Aorta (tissue), 5 donors: ENCODE measurements at regions of chr17 and their contacts with region 1.

Region 1: DNA sequence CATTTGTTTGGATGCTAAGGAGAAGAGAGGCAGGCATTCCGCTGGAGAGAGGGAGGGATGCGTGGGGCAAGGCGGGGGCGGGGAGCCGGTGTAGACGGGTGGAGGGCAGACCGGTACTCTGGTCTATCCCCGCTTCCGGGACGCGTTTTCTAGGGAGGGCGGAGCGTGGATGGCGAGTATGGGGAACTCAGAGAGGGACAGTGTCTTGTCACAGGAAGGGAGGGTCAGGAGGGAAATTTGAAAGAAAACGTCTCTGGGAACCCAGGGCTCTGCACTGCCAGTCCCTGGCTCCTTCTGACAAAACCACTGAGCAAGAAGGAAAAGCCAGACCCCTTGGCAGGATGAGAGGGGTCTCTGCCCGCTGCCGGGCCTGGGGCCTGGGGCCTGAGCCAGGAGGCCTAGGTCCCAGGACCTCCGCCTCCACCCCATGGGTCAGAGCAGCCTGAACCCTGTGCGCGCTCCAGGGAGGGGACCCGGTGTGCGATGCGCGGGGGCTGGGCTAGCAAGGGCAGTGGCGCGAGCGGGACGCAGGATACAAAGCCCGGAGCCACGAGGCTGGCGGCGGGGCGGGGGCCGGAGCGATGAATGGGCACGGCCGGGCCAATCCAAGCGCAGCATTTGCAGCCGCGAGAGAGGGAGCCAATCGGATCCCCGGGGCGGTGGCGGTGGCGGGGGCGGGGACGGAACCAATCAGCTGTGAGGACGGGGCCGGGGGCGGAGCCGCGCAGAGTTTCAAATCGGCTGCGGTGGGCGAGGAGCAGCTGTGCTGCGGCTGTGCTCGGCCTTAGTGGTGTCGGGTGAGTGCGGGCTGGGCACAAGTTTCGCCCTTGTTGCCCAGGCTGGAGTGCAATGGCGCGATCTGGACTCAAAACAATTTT is at the start of gene PIMREG:
- DNase-seq: peak; percentile 97 to 98
- ATAC-seq: peak; percentile 98
- H3K4me3 ChIP-seq: peak within 1 kb of the TSS; percentile 2 to 53
- H3K27ac ChIP-seq: no peak within 1 kb of the TSS
- H3K4me1 ChIP-seq: no peaks in the 10 kb centered on the region
- H3K27me3 ChIP-seq: no peaks in the 10 kb centered on the region
- total RNA-seq, gene PIMREG: 0.84 TPM in 1 of 2 donors, not detected in the other

Region 2: GRCh38 chr17:5378566-5379207 is 1065.2 kb before region 1 on chr17:
- intact Hi-C with region 1: loop called in 1 of 2 experiments (anchors 5 kb)
- DNase-seq: no peak
- ATAC-seq: no peak
- H3K4me3 ChIP-seq: no peak overlapping the region
- H3K27ac ChIP-seq: no peak overlapping the region
- H3K4me1 ChIP-seq: no peaks in the 10 kb centered on the region
- H3K27me3 ChIP-seq: no peaks in the 10 kb centered on the region